Psoas muscle (tissue), 8 donors: ENCODE measurements at regions of chr13 and their contacts with region 1.

Region 1: GRCh38 chr13:104616990-104617389 is 1550.8 kb upstream of the SLC10A2 start:
- DNase-seq: no peak
- ATAC-seq: no peak
- H3K4me3 ChIP-seq: no peak overlapping the region
- H3K27ac ChIP-seq: no peak overlapping the region
- H3K4me1 ChIP-seq: no peaks in the 10 kb centered on the region
- H3K27me3 ChIP-seq: no peaks in the 10 kb centered on the region
- CTCF ChIP-seq: no peak

Region 2: DNA sequence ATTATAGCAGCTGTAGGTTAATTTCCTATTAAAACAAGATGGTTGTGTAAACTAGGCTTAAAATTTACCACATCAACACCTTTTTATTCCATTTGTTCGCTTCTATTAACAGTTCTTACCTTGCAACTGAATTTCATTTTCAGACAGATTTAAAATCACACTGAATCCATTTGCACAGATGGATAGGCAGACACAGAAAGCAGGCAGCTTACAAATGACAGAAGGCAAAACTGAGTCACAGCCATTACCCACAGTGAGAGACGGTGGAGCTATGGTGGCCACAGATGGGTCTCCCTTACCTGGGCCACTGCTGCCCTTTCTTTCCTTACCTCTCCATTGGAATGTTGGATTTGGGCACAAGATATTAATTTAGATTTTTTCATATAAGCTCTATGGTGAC is 17.0 kb after region 1 on chr13:
- intact Hi-C with region 1: loop called in 1 of 2 experiments (anchors 2 kb)
- DNase-seq: no peak
- ATAC-seq: no peak
- H3K4me3 ChIP-seq: no peak overlapping the region
- H3K27ac ChIP-seq: no peak overlapping the region
- H3K4me1 ChIP-seq: no peaks in the 10 kb centered on the region
- H3K27me3 ChIP-seq: no peaks in the 10 kb centered on the region
- CTCF ChIP-seq: no peak